Activated T-helper 2 cell treated with anti-CD3 and anti-CD28 coated beads, Interferon-gamma antibody, Interleukin-2, Interleukin-4, amounts not matched to agents 10 μg/mL and 5 μg/mL and 100 μg/mL, durations not matched to agents 14 hours and 24 hours and 36 hours (primary cell): ENCODE measurements at regions of chr9 and their contacts with region 1.

Region 1: DNA sequence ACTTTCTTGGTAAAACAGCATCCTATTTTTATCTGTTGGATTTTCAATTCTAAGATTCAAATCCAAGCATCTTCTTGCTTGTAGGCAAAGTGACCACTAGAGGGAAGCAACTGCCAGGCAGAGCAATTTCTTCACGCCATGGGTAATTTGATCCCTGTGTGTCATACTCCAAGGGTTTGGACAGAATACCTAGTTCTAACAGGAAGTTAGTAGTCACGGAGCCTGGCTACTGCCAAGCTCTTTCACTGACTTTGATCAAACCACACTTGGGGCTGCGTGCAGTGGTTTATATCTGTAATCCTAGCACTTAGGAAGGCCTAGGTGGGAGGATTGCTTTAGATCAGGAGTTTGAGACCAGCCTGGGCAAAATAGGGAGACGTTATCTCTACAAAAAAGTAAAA is 473.6 kb upstream of the TNC start:
- DNase-seq: no peak
- H3K4me3 Mint-ChIP-seq: no peak overlapping the region
- H3K27ac Mint-ChIP-seq: no peak overlapping the region
- H3K4me1 Mint-ChIP-seq: no peaks in the 10 kb centered on the region
- H3K27me3 Mint-ChIP-seq: peaks cover 7% of the 10 kb centered on the region

Region 2: DNA sequence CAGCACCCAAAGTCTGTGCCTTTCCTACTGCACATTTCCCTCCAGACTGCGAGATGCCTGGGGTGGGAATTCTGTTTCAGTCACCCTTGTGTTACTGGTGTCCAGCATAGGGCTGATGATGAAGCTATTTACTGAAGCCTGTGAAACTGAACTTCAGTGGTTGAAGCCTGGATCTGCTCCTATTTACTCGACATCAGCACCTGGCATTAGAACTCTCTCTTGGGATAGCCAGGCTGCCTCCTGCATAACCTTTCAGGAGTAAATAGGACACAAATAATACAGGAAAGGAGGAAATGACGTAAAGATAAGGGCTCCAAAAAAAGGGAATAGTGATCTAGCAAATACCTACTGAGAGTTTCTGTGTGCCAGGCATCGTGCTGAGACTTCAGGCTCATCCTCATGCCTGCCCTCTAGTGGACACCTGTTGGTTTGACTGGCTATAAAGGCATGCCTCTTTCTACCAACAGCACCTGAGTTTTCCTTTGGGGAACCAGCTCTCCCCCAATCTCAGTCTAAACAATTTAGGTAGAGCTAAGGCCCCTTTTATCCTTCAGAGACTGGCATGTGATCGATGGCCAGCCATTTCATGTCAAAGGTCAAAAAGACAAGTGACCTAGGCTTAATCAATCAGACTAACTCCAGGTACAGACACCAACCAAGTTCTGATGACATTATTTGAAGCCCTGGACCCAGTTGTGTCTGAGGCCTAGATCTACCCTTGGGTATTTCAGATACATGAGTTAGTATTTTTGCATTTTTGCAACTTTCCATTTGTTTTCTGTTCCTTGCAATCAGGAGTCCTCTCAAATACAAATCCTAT is 903.4 kb after region 1 on chr9:
- intact Hi-C with region 1: loop called (anchors 10 kb)
- DNase-seq: peak; percentile 8
- H3K4me3 Mint-ChIP-seq: no peak overlapping the region
- H3K27ac Mint-ChIP-seq: no peak overlapping the region
- H3K4me1 Mint-ChIP-seq: no peaks in the 10 kb centered on the region
- H3K27me3 Mint-ChIP-seq: no peaks in the 10 kb centered on the region

Region 3: DNA sequence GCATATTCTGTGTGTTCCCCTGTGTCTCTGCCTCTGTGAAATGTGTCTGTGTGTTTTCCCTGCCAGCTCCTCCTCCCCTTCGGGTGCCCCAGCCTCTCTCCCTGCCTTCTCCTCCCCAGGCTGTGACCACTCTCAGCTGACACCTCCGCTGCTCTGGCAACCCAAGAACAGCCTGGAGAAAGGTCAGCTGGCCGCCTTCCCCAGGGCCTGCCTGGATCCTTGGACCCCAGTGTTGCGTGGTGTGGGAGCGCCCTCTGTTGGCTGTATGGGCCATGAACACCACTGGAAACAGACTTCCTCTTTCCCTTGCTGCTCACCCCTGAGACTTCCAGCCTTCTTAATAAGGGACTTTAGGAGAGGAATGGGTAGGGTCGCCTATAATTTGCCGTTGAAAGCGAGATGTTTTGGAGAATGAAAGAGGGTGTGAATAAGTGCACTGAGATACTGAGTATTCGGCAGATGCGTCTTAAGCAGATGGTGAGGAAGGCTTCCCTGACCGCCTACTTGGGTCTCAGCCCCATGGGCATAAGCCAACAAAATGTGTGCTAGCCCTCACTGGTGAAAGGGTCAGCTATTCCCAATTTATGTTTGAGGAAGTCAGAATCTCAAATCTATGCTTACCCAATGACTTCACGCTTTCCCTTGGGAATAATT is 980.6 kb after region 1 on chr9:
- intact Hi-C with region 1: loop called (anchors 10 kb)
- DNase-seq: no peak
- H3K4me3 Mint-ChIP-seq: no peak overlapping the region
- H3K27ac Mint-ChIP-seq: no peak overlapping the region
- H3K4me1 Mint-ChIP-seq: no peaks in the 10 kb centered on the region
- H3K27me3 Mint-ChIP-seq: no peaks in the 10 kb centered on the region

Region 4: DNA sequence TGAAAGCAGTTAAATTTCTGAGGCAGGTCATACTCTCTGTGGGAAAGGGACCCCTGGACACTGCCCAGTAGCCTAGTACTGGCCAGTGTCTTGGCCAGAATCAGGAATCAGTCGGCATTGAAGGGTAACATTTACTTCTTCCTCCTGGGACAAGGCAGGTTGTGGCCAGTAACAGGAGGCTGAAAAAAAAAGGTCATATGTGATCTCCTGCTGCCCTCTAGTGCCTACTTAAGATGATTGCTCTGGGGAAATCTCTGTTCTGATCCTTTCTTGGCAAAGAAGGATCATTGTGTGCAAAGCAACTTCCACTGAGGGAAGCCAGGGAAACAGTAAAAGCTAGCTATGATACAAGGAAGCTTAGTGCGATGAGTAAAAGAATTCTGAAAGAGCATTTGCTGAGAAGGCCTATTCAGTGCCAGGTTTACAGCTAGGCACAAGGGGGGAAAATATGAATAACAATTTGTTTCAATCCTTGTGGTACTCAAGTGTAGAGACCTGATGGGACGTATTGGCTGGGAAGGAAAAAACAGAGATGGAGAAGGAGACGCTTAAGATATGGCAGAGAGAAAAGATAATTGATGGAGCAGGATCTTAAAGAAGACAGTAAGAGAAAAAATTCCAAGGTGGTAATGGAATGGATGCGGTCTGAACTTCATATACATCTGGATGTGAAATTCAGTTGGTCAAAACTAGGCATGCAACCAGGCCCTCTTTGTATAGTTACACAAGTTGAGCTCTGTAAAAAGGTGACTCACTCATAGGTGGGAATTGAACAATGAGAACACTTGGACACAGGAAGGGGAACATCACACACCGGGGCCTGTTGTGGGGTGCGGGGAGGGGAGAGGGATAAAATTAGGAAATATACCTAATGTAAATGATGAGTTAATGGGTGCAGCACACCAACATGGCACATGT is 1069.7 kb after region 1 on chr9:
- intact Hi-C with region 1: loop called (anchors 5 kb)
- DNase-seq: no peak
- H3K4me3 Mint-ChIP-seq: no peak overlapping the region
- H3K27ac Mint-ChIP-seq: no peak overlapping the region
- H3K4me1 Mint-ChIP-seq: no peaks in the 10 kb centered on the region
- H3K27me3 Mint-ChIP-seq: no peaks in the 10 kb centered on the region